Activated B cell treated with CpG ODN at 0.5 μM for 24 hours (primary cell): ENCODE measurements at regions of chr2 and their contacts with region 1.

Region 1: DNA sequence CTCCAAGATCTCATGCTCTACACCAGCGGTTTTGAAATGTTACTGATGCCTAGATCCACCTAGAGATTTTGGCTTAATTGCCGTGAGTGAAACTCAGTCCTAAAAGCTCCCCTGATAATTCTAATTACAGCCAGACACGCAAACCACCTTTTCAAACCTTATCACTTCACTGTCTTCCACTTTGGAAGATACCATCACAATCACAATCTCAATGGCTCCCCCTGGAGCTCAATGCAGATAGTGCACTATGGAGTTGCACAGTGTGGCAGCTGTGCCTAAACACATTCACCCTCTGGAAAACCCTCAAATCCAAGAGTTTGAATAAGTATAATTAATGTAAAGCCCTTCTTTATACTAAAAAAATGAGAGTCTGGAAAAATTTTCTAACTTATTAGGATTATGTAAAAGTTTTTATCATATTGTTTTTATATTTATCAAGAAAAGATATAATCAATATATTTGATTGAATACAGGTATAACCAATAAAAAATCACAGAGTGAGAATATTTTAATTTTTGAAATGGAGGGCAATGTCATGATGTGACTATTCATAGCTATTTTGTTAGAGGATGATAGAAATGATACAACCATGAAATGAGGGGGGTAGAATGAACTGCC is 102.9 kb upstream of the SLC8A1 start:
- DNase-seq: no peak
- ATAC-seq: peak; percentile 50
- H3K4me3 Mint-ChIP-seq: no peak overlapping the region
- H3K27ac Mint-ChIP-seq: no peak overlapping the region
- H3K4me1 Mint-ChIP-seq: no peaks in the 10 kb centered on the region
- H3K27me3 Mint-ChIP-seq: peaks cover 4% of the 10 kb centered on the region
- CTCF ChIP-seq: peak; percentile 53

Region 2: DNA sequence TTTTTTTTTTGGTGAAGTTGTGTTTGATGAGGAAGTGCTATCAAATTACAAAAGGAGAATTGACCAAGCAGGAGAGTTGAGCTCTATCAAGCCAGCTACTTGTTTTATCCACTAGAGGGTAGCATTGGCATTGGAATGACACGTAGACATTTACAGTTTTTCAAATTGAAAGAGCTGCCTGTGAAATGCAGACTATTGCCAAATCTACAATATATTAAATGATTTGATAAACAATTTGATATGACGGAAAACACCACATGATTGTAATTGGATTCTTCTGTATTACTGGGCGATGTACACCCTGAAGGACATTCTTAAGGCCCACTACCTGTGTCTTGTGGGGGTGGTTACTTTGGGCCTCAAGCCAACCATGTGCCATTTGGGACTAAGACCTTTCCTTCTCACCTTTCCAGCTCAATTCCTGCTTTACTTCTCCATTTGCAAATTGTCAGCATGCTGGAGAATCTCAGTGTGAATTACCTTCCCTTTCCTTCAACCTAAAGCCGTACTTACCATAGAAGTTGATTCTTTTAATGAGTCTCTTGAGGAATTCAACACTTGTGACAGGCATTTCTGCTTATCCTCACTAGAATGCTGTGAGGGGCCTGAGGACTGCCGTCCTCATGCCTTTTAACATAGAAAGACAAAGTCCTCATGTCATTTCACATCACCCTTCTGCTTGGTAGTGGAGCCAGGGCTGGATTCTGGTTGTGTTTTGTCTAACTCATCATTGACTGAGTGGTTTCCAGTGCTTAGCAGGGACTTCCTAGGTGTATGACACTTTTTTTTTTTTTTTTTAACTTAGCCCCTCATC is 640.9 kb before region 1 on chr2:
- CTCF ChIA-PET with region 1: interaction called, 54 read pairs
- POLR2A ChIA-PET with region 1: no interaction called
- intact Hi-C with region 1: loop called (anchors 1 kb)
- DNase-seq: no peak
- ATAC-seq: peak; percentile 34
- H3K4me3 Mint-ChIP-seq: no peak overlapping the region
- H3K27ac Mint-ChIP-seq: no peak overlapping the region
- H3K4me1 Mint-ChIP-seq: no peaks in the 10 kb centered on the region
- H3K27me3 Mint-ChIP-seq: peaks cover 2% of the 10 kb centered on the region
- CTCF ChIP-seq: no peak

Region 3: GRCh38 chr2:40244675-40245074 is 310.1 kb before region 1 on chr2:
- CTCF ChIA-PET with region 1: interaction called, 3 read pairs
- POLR2A ChIA-PET with region 1: no interaction called
- intact Hi-C with region 1: loop called (anchors 1 kb)
- DNase-seq: no peak
- ATAC-seq: no peak
- H3K4me3 Mint-ChIP-seq: no peak overlapping the region
- H3K27ac Mint-ChIP-seq: no peak overlapping the region
- H3K4me1 Mint-ChIP-seq: no peaks in the 10 kb centered on the region
- H3K27me3 Mint-ChIP-seq: no peaks in the 10 kb centered on the region
- CTCF ChIP-seq: no peak

Region 4: DNA sequence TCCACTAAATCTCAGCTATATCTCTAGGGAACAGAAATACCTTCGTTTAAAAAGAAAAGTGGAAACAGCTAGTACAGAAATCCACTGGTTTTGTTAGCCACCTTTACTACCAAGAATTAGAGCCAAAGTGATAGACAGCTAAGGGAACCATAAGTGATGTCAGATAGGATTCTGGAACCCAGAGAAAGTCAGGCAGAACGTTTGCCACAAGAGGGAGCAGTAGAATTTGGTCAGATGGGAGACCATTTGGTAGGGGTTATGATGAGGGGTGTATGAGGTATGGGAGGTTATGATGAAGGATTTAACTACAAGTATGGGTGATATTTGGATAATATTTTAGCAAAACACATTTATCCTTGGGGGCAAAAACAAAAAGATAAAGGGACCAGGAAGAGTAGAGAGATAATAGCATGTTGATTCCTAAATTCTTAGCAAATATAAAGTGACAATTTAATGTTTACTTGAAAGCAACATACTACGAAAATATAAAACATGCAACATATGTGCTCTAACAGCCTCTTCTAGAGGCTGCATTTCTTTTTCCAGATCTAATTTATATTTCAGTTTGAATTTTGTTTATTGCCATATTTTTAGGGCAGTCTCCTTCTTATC is 106.2 kb before region 1 on chr2:
- CTCF ChIA-PET with region 1: interaction called, 4 read pairs
- POLR2A ChIA-PET with region 1: no interaction called
- intact Hi-C with region 1: loop called (anchors 2 kb)
- DNase-seq: no peak
- ATAC-seq: no peak
- H3K4me3 Mint-ChIP-seq: no peak overlapping the region
- H3K27ac Mint-ChIP-seq: no peak overlapping the region
- H3K4me1 Mint-ChIP-seq: peaks cover 25% of the 10 kb centered on the region
- H3K27me3 Mint-ChIP-seq: peaks cover 18% of the 10 kb centered on the region
- CTCF ChIP-seq: no peak

Region 5: DNA sequence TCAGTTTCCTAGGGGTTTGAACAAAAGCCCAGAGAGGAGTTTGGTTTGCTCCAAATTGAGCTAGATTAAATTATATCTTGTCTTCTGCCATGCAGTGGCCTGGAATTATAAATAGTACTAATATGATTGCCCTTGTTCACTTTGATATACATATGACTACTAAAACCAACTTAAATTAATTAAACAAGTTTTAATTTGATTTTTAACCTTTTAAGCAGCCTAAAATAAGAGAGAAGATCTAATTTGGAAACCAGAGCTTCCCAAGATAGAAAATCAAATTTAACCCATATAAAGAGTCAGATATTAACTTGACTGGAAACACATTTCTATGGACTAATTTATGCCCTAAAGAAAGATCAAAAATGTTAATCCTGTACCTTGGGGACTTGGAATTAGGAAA is 341.6 kb after region 1 on chr2:
- CTCF ChIA-PET with region 1: no interaction called
- POLR2A ChIA-PET with region 1: no interaction called
- intact Hi-C with region 1: no loop called
- DNase-seq: no peak
- ATAC-seq: no peak
- H3K4me3 Mint-ChIP-seq: no peak overlapping the region
- H3K27ac Mint-ChIP-seq: no peak overlapping the region
- H3K4me1 Mint-ChIP-seq: no peaks in the 10 kb centered on the region
- H3K27me3 Mint-ChIP-seq: no peaks in the 10 kb centered on the region
- CTCF ChIP-seq: no peak

Region 6: GRCh38 chr2:41101281-41101680 is 546.5 kb after region 1 on chr2:
- CTCF ChIA-PET with region 1: no interaction called
- POLR2A ChIA-PET with region 1: no interaction called
- intact Hi-C with region 1: no loop called
- DNase-seq: no peak
- ATAC-seq: no peak
- H3K4me3 Mint-ChIP-seq: no peak overlapping the region
- H3K27ac Mint-ChIP-seq: no peak overlapping the region
- H3K4me1 Mint-ChIP-seq: no peaks in the 10 kb centered on the region
- H3K27me3 Mint-ChIP-seq: no peaks in the 10 kb centered on the region
- CTCF ChIP-seq: no peak

Region 7: DNA sequence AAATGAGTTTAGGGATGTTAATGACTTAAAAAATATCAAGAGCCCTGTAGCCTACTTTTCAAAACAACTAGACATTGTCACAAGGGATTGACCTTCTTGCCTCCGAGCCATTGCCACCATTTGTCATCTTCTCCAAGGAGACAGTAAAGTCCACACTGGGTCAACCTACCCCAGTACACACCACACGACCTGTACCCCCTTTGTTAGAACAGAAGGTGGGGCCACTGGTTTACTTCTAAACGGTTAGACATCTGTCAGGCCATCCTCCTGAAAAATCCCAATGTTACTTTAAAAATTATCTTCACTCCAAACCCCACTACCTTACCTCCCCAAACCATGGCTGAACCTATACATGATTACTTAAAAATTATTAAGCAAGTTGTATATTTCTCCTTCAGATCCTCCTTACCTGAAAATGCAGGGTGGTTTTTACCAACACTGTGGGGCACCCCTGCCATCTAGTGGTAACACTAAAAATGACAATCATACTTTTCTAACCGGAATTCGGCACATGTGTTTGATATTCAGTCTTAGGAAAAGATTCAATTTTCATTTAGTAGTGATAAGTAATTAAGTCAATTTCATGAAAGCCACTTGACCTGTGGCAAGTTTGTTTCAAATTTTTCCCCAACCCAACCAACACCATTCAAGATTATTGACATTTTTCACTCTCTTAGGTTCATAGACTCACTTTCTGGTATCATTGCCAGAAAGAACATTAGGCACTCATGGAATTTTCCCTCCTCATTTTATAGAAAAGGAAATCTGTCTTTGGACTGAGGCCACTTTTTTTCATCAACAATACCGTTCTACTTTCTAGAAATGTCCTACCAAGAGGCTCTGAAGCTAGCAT is 1227.8 kb after region 1 on chr2:
- CTCF ChIA-PET with region 1: no interaction called
- POLR2A ChIA-PET with region 1: no interaction called
- intact Hi-C with region 1: loop called (anchors 10 kb)
- DNase-seq: no peak
- ATAC-seq: no peak
- H3K4me3 Mint-ChIP-seq: no peak overlapping the region
- H3K27ac Mint-ChIP-seq: no peak overlapping the region
- H3K4me1 Mint-ChIP-seq: no peaks in the 10 kb centered on the region
- H3K27me3 Mint-ChIP-seq: peaks cover 12% of the 10 kb centered on the region
- CTCF ChIP-seq: peak; percentile 87